CD14-positive monocyte (primary cell): ENCODE measurements at regions of chr9 and their contacts with region 1.

Region 1: GRCh38 chr9:120936011-120936763 is 9.6 kb upstream of the TRAF1 start:
- DNase-seq: peak; percentile 78 to 88 (median 86)
- H3K4me3 ChIP-seq: peak overlapping the region in 1 of 3 experiments; percentile 44
- H3K4me3 Mint-ChIP-seq: peak overlapping the region in 1 of 2 donors; percentile 79
- H3K27ac ChIP-seq: peak overlapping the region; percentile 78 to 90
- H3K27ac Mint-ChIP-seq: peak overlapping the region; percentile 88 to 97 (median 94)
- H3K4me1 ChIP-seq: peaks cover 48 to 56% of the 10 kb centered on the region in 2 donors
- H3K4me1 Mint-ChIP-seq: peaks cover 51% of the 10 kb centered on the region
- H3K27me3 ChIP-seq: no peaks in the 10 kb centered on the region
- H3K27me3 Mint-ChIP-seq: peaks cover 0 to 3% (median 0%) of the 10 kb centered on the region in 3 donors
- CTCF ChIP-seq: peak; percentile 88

Region 2: GRCh38 chr9:120869726-120870125 is 66.5 kb before region 1 on chr9:
- intact Hi-C with region 1: loop called in 1 of 2 experiments (anchors 2 kb)
- DNase-seq: no peak
- H3K4me3 ChIP-seq: peak overlapping the region in 1 of 3 experiments; percentile 88
- H3K4me3 Mint-ChIP-seq: no peak overlapping the region
- H3K27ac ChIP-seq: peak overlapping the region; percentile 10 to 95
- H3K27ac Mint-ChIP-seq: peak overlapping the region; percentile 4 to 99 (median 96)
- H3K4me1 ChIP-seq: peaks cover 25 to 30% of the 10 kb centered on the region in 2 donors
- H3K4me1 Mint-ChIP-seq: peaks cover 36% of the 10 kb centered on the region
- H3K27me3 ChIP-seq: no peaks in the 10 kb centered on the region
- H3K27me3 Mint-ChIP-seq: no peaks in the 10 kb centered on the region
- CTCF ChIP-seq: no peak

Region 3: DNA sequence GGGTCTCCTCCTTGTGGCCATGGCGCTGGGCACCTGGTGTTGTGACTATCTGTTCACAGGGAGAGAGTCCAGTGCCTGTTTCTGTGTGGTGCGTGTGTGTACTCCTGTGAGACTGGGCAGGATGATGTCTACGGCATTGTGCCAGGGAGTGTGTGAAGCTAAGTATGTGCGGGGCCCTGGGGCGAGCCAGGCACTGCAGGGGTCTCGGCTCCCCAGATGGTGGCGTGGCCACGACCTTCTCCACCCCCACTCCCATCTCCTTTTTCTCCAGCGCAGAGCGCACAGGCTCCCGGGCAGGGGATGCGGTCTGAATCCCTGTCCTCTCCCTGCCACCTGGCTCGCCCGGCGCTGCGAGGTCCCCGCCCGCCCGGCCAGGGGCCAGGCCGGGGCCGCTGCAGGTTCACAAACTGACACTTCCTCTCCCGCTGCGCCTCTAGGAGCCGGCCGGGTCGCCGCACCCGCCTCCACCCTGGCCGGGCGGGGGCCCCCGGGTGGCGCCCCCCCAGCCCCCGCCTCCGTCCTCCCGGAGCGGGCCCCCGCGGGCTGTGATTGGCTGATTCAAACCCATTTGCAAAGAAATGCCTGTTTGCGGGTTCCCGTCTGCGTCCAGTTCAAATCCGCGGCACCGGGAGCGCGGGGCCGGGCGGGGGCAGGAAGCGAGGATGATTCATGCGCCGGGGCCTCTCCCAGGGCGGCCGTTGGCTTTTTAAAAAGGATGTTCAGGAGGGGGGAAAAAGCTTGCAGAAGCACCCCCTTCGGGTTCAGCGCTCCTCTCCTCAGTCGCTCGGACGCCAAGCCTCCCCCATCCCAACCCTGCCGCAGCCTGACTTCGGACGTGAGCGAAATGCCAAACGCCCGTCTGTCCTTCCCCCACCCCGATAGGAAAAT is 60.0 kb before region 1 on chr9:
- intact Hi-C with region 1: loop called (anchors 2 kb)
- DNase-seq: peak; percentile 86 to 91 (median 87)
- H3K4me3 ChIP-seq: peak overlapping the region; percentile 63 to 97 (median 85)
- H3K4me3 Mint-ChIP-seq: peak overlapping the region; percentile 82 to 91
- H3K27ac ChIP-seq: peak overlapping the region; percentile 85 to 88
- H3K27ac Mint-ChIP-seq: peak overlapping the region; percentile 84 to 95 (median 93)
- H3K4me1 ChIP-seq: peaks cover 29 to 31% of the 10 kb centered on the region in 2 donors
- H3K4me1 Mint-ChIP-seq: peaks cover 44% of the 10 kb centered on the region
- H3K27me3 ChIP-seq: no peaks in the 10 kb centered on the region
- H3K27me3 Mint-ChIP-seq: peaks cover 1 to 3% (median 1%) of the 10 kb centered on the region in 3 donors
- CTCF ChIP-seq: no peak

Region 4: GRCh38 chr9:120925535-120926396 is 10.4 kb before region 1 on chr9:
- intact Hi-C with region 1: no loop called
- DNase-seq: peak; percentile 89 to 99 (median 93)
- H3K4me3 ChIP-seq: no peak overlapping the region
- H3K4me3 Mint-ChIP-seq: peak overlapping the region; percentile 57 to 68
- H3K27ac ChIP-seq: peak overlapping the region; percentile 87 to 97
- H3K27ac Mint-ChIP-seq: peak overlapping the region; percentile 89 to 96 (median 94)
- H3K4me1 ChIP-seq: peaks cover 47 to 56% of the 10 kb centered on the region in 2 donors
- H3K4me1 Mint-ChIP-seq: peaks cover 46% of the 10 kb centered on the region
- H3K27me3 ChIP-seq: no peaks in the 10 kb centered on the region
- H3K27me3 Mint-ChIP-seq: peaks cover 0 to 2% (median 0%) of the 10 kb centered on the region in 3 donors
- CTCF ChIP-seq: no peak

Region 5: DNA sequence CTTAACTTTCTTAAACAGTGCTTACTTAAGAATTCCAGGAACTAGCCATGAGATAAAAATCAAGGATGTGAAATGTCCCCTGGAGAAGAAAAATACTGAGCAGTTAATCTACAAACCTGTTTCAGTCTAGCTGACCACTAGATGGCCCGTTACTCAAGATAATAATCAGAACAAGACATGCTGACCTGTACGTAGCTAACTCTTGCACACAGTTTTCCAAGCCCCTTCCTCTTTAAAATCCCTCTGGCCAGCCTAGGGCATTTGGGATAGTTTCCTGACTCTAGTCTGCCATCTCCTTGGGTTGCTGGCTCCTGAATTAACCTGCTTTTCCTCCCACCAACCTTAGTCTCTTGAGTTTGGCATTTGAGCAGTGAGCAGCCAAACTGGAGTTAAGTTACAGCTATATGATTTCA is 49.6 kb after region 1 on chr9:
- intact Hi-C with region 1: no loop called
- DNase-seq: peak; percentile 2 to 16 (median 8)
- H3K4me3 ChIP-seq: no peak overlapping the region
- H3K4me3 Mint-ChIP-seq: no peak overlapping the region
- H3K27ac ChIP-seq: no peak overlapping the region
- H3K27ac Mint-ChIP-seq: no peak overlapping the region
- H3K4me1 ChIP-seq: no peaks in the 10 kb centered on the region
- H3K4me1 Mint-ChIP-seq: peaks cover 4% of the 10 kb centered on the region
- H3K27me3 ChIP-seq: no peaks in the 10 kb centered on the region
- H3K27me3 Mint-ChIP-seq: no peaks in the 10 kb centered on the region
- CTCF ChIP-seq: peak; percentile 30